Right ventricle myocardium superior (tissue), 1 donor: ENCODE measurements at regions of chrX and their contacts with region 1.

Region 1: DNA sequence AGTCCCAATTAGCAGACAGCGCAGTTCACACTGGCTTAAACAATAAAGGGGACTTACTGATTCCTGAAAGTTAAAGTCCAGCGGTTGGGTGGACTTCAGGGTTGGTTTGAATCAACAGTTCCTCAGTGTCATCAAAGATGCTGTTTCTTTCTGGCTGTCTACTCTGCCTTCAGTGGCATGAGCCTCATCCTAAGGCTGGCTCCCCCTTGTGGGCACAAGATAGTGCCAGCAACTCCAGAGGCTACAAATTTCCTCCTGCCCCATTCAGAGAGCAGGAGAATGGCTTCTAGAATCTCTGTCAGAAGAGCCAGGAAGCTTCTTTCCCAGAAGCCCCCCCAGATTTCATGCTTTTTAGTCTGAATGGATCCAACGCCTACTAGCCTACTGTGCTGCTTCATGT is 82.4 kb upstream of the MTM1 start:
- DNase-seq: peak; percentile 46
- ATAC-seq: peak; percentile 70

Region 2: DNA sequence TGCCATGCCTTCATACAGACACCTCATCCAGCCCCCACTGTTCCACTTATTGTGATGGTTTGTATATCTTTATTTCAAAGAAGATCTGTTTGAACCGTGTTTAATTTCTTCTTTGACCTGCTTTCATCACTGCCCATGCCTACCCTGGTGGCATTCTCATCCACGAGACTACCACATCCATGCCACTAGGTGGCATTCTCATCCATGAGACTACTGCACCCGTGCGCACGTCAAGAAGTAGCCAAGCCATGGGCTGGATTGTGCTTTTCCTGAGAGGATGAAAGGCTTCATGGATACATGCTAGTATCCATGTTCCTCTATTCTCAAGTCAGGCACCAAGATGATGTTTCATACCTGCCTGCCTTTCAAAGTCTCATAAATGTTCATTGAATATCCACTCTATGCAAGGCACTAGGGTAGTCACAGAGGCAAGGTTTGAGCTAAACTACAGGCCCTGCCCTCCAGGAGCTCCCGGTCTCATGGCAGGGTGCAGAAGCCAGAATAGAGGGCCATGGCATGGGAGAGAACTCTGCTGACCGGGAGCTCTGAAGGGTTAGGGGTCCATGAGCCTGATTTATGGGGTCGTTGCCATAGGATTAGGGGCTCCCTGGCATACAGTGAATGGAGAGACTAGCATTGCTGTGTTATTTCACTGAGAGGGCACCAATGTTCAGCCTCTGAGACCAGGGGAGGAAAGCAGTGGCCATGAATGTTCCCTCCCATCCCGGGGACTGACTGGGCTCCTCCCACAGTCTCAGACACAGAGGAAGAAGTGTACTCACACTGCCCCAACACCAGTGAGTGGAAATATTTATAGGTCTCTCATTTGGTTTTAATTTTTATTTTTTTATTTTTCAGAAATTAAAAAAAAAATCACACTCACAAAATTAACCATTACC is 522.9 kb before region 1 on chrX:
- intact Hi-C with region 1: loop called (anchors 10 kb)
- DNase-seq: no peak
- ATAC-seq: peak; percentile 81